ENCODE measurements at regions of chr15 and their contacts with region 1.

Region 1: DNA sequence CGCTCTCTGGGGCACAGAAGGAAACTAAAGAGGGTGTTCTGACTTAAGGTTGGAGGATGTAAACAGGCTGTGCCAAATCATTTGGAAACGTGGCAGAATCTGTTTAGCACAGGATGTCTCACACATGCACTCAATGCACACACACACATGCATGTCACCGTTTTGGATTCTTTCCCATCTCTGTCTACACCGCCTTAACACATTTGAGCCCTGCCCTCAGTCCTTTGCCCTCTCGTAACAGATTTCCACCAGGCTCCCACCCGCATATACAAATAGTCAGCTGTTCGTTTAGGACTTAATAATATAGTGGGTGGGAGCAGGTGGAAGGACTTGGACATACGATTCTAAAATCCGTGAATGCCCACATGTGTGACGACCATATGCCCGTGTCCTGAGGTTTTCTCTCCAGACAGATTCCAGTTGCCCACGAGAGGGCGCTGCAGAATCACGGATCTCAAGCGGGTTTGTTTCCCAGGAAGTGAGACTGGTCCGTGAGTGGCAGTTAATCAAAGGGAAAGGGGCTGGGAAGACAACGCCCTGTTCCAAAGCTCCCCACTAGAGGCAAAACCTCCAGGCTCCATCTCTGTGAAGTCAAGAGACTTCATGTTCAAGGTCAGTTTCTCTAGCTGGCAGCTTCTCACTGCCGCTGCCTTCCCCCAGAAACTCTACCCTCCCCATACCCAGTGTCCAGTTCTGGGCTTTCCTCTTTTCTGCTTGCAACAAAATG is 44.5 kb downstream of the NOX5 start:
- DNase-seq: peak; percentile 83 to 88
- H3K4me3 ChIP-seq: no peak overlapping the region
- H3K27ac ChIP-seq: no peak overlapping the region
- H3K4me1 ChIP-seq: no peaks in the 10 kb centered on the region
- H3K27me3 ChIP-seq: no peaks in the 10 kb centered on the region
- CTCF ChIP-seq: peak; percentile 79 to 87 (median 83)
- POLR2A ChIP-seq: no peak

Region 2: GRCh38 chr15:68650901-68651709 is 407.9 kb before region 1 on chr15:
- intact Hi-C with region 1: no loop called
- DNase-seq: peak in 1 of 2 donors; percentile 23
- H3K4me3 ChIP-seq: no peak overlapping the region
- H3K27ac ChIP-seq: no peak overlapping the region
- H3K4me1 ChIP-seq: peaks cover 0 to 5% of the 10 kb centered on the region in 2 donors
- H3K27me3 ChIP-seq: no peaks in the 10 kb centered on the region
- CTCF ChIP-seq: peak in 3 of 4 experiments; percentile 13 to 48 (median 36)
- POLR2A ChIP-seq: no peak

Region 3: GRCh38 chr15:69265347-69265955 is 206.5 kb after region 1 on chr15:
- intact Hi-C with region 1: loop called (anchors 10 kb)
- DNase-seq: no peak
- H3K4me3 ChIP-seq: no peak overlapping the region
- H3K27ac ChIP-seq: no peak overlapping the region
- H3K4me1 ChIP-seq: no peaks in the 10 kb centered on the region
- H3K27me3 ChIP-seq: no peaks in the 10 kb centered on the region
- CTCF ChIP-seq: peak; percentile 43 to 54 (median 46)
- POLR2A ChIP-seq: no peak

Region 4: DNA sequence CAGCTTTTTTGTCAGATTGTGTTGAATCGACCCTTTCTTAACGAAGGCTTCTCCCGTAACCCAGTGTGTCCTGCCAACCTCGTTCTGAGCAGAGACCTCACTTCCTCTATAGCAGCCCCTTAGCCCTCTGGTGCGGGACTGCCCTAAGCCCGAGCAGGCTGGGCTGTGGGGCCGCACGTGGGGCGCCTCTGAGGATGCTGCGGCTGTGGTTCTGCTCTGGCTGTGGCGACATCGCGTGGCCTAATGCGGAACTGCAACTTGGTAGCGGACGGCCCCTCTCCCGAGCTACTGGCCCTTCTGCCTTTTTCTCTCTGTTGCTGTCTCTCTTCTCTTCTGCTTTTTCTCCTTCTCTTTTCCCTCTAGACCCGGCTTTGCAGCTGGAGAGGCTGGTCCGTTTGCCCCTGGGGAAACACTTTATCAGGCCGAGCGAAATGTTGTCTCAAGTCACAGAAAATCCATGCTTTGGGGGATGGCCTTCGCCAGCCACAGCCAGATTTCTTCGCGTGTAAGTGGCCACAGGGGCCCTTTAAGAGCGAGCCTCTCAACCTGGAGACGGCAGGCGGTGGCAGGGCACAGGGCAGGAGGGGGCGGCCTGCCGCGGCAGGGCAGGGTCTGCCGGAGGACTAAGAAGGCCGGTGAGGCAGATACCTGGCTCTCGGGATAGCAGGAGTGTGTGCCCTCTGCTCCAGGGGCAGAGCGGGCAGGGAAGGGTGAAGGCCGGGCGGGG is 335.7 kb after region 1 on chr15:
- intact Hi-C with region 1: loop called (anchors 5 kb)
- DNase-seq: peak; percentile 76 to 90
- H3K4me3 ChIP-seq: no peak overlapping the region
- H3K27ac ChIP-seq: no peak overlapping the region
- H3K4me1 ChIP-seq: peaks cover 0 to 6% of the 10 kb centered on the region in 2 donors
- H3K27me3 ChIP-seq: no peaks in the 10 kb centered on the region
- CTCF ChIP-seq: peak; percentile 89 to 96 (median 92)
- POLR2A ChIP-seq: no peak

Region 5: DNA sequence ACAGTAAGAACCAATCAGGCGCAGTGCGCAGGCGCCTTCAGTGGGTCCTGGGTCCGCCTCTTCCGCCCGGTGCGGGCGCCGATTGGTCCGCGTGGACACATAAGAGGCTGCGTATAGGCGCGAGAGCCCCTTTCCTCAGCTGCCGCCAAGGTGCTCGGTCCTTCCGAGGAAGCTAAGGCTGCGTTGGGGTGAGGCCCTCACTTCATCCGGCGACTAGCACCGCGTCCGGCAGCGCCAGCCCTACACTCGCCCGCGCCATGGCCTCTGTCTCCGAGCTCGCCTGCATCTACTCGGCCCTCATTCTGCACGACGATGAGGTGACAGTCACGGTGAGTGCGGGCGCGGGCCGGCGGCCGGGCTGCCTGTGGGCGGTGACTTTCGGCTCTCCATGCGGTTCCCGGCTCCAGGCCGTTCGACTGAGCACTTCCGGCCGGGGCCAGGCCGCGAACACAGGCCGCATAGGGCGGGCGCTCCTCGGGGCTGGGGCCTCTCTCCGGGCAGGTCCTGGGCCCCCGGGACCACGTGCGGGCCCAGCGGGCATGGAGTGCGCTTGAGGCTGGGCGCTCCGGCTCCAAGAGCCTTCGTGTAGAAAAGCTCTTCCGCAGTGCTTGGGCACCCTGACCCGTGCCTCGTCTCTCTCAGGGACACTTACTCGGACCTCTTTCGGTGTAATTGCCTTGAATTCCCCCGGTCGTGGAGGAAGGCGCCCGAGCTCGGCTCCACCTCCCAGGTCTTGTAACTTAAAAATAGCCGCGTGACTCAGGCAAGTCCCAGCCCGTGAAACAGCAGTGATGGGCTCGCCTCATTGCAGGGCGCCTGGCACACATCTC is 393.9 kb after region 1 on chr15 and contains the start of gene RPLP1:
- intact Hi-C with region 1: no loop called
- DNase-seq: peak; percentile 96
- H3K4me3 ChIP-seq: peak within 1 kb of the TSS; percentile 74 to 76
- H3K27ac ChIP-seq: peak within 1 kb of the TSS; percentile 91 to 95
- H3K4me1 ChIP-seq: peaks cover 0 to 5% of the 10 kb centered on the region in 2 donors
- H3K27me3 ChIP-seq: no peaks in the 10 kb centered on the region
- CTCF ChIP-seq: peak in 1 of 4 experiments; percentile 9
- POLR2A ChIP-seq: peak; percentile 89 to 90
- total RNA-seq, gene RPLP1: 61.5 to 2,786 (median 1,440) TPM

Measured in uterus (tissue), 4 donors.